ENCODE measurements at regions of chr20 and their contacts with region 1.

Region 1: DNA sequence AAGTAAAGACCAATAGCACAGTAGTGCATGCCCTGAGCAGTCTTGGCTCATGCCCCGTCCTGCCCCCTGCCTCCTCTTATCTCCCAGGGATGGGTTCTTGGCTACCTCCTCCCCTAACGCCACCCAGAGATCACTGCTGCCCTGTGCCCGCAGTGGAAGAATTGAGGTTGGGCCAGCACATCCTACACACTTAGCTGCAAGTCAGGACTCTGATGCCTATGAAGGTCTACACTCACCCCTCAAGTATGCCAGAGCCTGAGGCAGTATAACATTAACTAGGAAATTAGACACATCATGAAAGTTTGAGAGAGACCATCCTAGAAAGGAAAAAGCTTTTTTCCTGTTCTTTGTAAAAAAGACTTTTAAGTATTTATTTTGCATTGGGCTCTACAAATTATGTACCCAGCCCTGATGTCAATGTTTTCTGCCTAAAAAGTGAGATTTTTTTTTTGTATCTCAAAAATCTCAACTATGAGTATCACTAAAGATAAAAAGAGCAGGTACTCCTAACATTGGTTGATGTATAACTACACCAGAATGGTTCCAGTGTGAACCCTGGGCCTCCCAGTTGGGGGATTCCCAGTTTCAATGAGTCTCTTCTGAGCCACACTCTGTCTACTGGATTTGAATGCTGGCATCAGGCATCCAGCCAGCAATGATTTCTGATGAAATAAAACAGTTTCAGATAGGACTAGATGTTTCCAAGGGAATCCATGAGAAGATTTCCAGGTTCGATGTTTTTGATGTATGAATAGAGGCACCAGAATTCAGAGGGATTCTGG is 115.4 kb downstream of the ISM1 start:
- DNase-seq: no peak
- H3K4me3 ChIP-seq: no peak overlapping the region
- H3K27ac ChIP-seq: no peak overlapping the region
- H3K4me1 ChIP-seq: peaks cover 0 to 33% (median 20%) of the 10 kb centered on the region in 4 donors
- H3K27me3 ChIP-seq: no peaks in the 10 kb centered on the region
- CTCF ChIP-seq: no peak
- EP300 ChIP-seq: no peak
- POLR2A ChIP-seq: no peak

Region 2: DNA sequence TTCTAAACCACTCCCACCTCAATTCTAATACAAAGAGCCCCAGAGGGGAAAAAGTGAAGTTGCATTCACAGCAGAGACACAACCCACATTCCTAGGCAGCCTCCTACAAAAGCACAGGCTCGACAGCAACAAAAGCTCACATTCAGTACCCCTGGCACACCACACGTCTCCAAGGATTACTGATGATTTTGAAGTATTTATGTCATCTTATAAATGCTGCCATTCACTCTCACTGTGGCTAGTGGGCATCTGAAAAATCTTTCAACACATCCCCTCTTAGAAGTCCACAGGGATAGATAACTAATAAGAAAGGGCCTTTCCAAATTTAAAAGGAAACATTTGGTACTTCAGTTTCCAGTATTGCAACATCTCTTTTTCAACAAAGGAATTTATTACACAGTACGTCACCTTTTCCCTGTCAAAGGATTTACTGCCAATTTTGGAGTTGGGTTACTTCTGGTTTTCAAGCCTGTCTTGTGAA is 155.5 kb after region 1 on chr20:
- intact Hi-C with region 1: loop called (anchors 10 kb)
- DNase-seq: no peak
- H3K4me3 ChIP-seq: peak overlapping the region in 2 of 4 donors; percentile 7 to 12
- H3K27ac ChIP-seq: peak overlapping the region; percentile 69 to 77 (median 74)
- H3K4me1 ChIP-seq: peaks cover 11 to 48% (median 26%) of the 10 kb centered on the region in 4 donors
- H3K27me3 ChIP-seq: no peaks in the 10 kb centered on the region
- CTCF ChIP-seq: peak in 1 of 3 experiments; percentile 43
- EP300 ChIP-seq: no peak
- POLR2A ChIP-seq: no peak

Measured in esophagus muscularis mucosa (tissue), 4 donors.